ENCODE measurements at regions of chr11 and their contacts with region 1.

Region 1: GRCh38 chr11:58513747-58514367 is 6.0 kb upstream of the OR5B21 start:
- DNase-seq: peak in 1 of 2 donors; percentile 16
- ATAC-seq: peak; percentile 86

Region 2: GRCh38 chr11:57823859-57824258 is 690.0 kb before region 1 on chr11:
- intact Hi-C with region 1: loop called in 1 of 2 experiments (anchors 10 kb)
- DNase-seq: no peak
- ATAC-seq: no peak

Region 3: GRCh38 chr11:58616594-58616993 is 102.7 kb after region 1 on chr11:
- intact Hi-C with region 1: no loop called
- DNase-seq: no peak
- ATAC-seq: no peak

Measured in left colon (tissue), 2 donors.